Right cardiac atrium (tissue), 5 donors: ENCODE measurements at regions of chr11 and their contacts with region 1.

Region 1: GRCh38 chr11:12377824-12378593 is 638 bp downstream of the PARVA start:
- DNase-seq: peak; percentile 82 to 90 (median 88)
- ATAC-seq: peak; percentile 76 to 80
- H3K4me3 ChIP-seq: peak overlapping the region; percentile 54
- H3K27ac ChIP-seq: peak overlapping the region; percentile 84
- H3K4me1 ChIP-seq: peaks cover 11% of the 10 kb centered on the region
- H3K27me3 ChIP-seq: no peaks in the 10 kb centered on the region

Region 2: DNA sequence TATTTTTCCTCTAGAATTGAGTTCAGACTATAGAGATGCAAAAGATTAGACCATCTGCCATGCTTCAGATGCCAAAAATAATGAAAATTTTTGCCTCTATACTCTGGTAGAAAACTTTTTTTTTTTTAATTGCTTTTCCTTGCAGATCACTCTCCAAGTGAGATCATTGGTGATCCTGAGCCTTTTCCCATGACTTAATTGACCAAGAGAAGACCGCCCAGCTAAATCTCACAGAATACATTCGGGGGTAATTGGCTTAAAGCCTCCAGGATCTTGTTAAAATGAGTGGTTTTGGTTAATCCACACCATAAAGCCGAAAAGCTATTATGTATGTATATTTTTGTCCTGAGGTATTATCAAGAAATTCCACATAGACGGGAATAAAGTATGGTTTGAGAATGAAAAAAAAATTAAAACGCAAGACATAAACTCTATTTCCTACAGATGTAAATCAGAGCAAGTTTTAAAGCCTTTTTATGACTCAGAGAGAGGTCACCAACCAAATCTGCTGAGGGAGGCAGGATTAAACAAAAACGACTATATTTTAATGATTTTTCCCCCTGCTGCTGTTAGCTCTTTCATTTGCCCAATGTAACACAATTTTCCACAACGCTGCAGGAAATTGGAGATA is 63.3 kb after region 1 on chr11:
- intact Hi-C with region 1: no loop called
- DNase-seq: no peak
- ATAC-seq: no peak
- H3K4me3 ChIP-seq: no peak overlapping the region
- H3K27ac ChIP-seq: no peak overlapping the region
- H3K4me1 ChIP-seq: peaks cover 2% of the 10 kb centered on the region
- H3K27me3 ChIP-seq: no peaks in the 10 kb centered on the region

Region 3: DNA sequence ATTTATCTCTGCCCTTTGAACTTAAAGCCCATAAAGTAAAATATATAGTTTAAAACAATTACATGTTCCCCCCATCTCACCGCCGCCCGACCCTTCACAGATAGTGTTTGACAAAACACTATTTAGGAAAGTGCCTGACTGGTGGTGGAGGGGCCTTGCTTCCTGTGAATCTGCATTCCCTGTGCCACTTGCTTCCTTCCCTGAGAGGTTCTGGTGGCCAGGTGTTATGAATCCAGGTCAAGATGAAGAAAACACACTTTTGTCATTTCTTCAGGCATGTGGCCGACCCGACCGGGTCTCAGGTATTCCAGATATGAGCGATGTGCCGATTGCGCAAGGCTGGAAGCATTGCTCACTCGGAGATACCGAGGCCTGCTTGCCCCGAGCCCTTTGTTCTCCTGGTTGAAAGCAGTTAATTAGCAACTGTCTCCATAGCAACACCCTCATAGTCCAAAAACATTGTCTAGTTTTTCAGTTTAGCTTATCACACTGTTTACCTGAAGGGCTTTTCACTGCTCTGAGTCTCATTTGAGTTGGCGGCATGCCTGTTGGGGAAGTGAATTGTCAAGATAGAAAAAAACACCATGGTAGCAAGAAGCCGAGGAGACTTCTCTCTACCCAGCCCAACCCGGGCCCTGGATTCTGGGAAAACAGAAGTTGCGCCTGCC is 424.5 kb after region 1 on chr11:
- intact Hi-C with region 1: no loop called
- DNase-seq: peak; percentile 58 to 76 (median 68)
- ATAC-seq: peak; percentile 74 to 93
- H3K4me3 ChIP-seq: no peak overlapping the region
- H3K27ac ChIP-seq: no peak overlapping the region
- H3K4me1 ChIP-seq: peaks cover 15% of the 10 kb centered on the region
- H3K27me3 ChIP-seq: no peaks in the 10 kb centered on the region

Region 4: DNA sequence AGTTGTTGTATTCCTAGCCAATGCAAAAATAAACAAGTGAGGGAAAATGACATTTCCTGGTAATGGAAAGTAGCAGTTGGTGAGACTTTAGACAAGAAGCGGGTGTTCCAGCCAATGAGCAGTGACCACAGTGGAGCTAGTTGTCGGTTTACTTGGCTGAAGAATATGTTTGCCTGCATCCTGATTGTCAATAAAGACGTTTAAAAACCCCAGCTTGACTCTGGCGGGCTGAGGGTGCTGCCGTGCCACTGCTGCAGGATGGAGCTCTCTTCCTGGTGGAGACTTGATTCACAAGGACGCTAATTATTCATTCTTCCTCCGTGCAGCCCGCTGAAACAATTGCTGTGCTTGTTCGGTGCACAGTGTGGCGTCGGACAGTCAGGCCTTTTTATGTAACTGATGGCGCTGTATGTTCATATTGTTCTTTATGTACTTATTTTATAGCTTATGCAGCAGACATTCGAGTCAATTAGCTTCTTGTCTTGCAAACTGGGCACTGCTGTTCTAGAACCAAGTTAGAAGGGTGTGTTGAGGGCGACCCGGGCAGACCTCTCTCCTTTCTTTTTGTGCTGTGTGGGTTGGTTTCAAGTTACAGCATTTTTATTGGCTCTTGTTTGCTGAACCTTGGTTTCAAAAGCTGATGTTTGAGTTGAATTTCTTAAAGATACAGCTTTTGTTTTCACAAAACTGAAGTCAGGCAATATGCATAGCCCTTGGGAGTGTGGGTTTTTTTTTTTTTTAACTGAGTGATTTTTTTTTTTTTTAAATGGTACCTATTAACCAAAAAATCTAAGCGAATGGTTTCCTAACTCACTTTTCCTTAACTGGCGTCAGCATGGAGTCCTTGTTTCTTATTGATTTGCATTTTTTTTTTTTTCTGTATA is 450.2 kb after region 1 on chr11:
- intact Hi-C with region 1: loop called in 1 of 4 experiments (anchors 10 kb)
- DNase-seq: peak in 2 of 3 donors; percentile 64 to 72
- ATAC-seq: peak; percentile 83 to 87
- H3K4me3 ChIP-seq: peak overlapping the region; percentile 63
- H3K27ac ChIP-seq: peak overlapping the region; percentile 87
- H3K4me1 ChIP-seq: peaks cover 21% of the 10 kb centered on the region
- H3K27me3 ChIP-seq: no peaks in the 10 kb centered on the region